ENCODE measurements at regions of chr6 and their contacts with region 1.

Region 1: DNA sequence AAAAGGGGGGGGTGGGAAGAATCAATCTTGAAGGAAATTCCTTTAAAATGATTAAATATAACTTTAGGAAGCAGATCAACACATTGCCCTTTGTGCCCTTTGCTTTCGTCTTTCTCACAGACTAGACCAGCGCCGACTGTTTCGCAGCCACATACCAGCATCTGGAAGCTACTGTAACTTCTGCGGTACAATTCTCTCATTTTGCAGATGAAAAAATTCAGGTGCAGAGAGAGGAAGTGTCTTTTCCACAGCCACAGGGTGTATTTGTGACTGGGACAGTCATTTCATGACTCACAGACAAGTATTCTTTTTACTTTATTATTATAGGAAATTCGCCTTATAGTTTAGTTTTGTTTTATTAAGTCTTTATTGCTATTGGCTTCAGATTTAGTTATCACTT is 84.2 kb downstream of the UST start:
- DNase-seq: no peak
- H3K4me3 ChIP-seq: no peak overlapping the region
- H3K27ac ChIP-seq: no peak overlapping the region
- H3K27me3 ChIP-seq: no peaks in the 10 kb centered on the region
- CTCF ChIP-seq: no peak

Region 2: GRCh38 chr6:148471624-148472159 is 359.4 kb before region 1 on chr6:
- CTCF ChIA-PET with region 1: no interaction called
- POLR2A ChIA-PET with region 1: interaction called, 12 read pairs
- DNase-seq: no peak
- H3K4me3 ChIP-seq: no peak overlapping the region
- H3K27ac ChIP-seq: no peak overlapping the region
- H3K27me3 ChIP-seq: no peaks in the 10 kb centered on the region
- CTCF ChIP-seq: no peak

Measured in AG04450 (cell line).